Panc1 (cell line): ENCODE measurements at regions of chr3 and their contacts with region 1.

Region 1: DNA sequence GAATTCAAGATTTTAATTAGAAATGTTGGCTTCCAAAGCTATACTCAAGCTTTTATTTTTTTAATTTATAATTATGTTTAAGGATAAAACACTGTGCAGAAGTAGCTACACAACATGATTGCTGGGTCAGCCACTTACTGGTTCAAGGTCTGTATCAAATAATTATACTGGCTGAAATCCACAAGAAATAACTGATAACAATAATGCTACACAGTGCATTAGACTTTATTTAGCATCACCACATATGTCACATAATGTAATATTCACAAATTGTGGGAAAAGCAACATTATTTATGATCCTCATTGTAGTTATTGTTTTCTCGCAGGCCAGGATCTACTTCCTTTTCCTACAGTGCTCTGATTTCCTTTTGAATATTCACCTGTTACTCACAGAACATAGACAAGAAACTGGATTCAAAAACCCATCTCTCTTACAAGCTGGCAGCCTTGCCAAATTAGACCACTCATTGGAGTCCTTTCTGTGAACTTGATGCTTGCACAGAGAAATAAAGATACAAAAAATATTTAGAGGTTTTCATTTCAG is 161.7 kb downstream of the MECOM start:
- DNase-seq: no peak
- ATAC-seq: no peak
- H3K4me3 ChIP-seq: no peak overlapping the region
- H3K27ac ChIP-seq: no peak overlapping the region
- H3K4me1 ChIP-seq: no peaks in the 10 kb centered on the region
- H3K27me3 ChIP-seq: no peaks in the 10 kb centered on the region
- CTCF ChIP-seq: no peak

Region 2: GRCh38 chr3:169212086-169212485 is 289.8 kb before region 1 on chr3:
- CTCF ChIA-PET with region 1: no interaction called
- POLR2A ChIA-PET with region 1: interaction called, 11 read pairs
- in situ Hi-C with region 1: no loop called
- intact Hi-C with region 1: no loop called
- DNase-seq: no peak
- ATAC-seq: no peak
- H3K4me3 ChIP-seq: no peak overlapping the region
- H3K27ac ChIP-seq: no peak overlapping the region
- H3K4me1 ChIP-seq: no peaks in the 10 kb centered on the region
- H3K27me3 ChIP-seq: no peaks in the 10 kb centered on the region
- CTCF ChIP-seq: no peak